Psoas muscle (tissue), 8 donors: ENCODE measurements at regions of chr14 and their contacts with region 1.

Region 1: GRCh38 chr14:61837336-61838229 is 75.4 kb downstream of the SNAPC1 start:
- DNase-seq: peak; percentile 64 to 78
- ATAC-seq: peak; percentile 90 to 99 (median 94)
- H3K4me3 ChIP-seq: no peak overlapping the region
- H3K27ac ChIP-seq: no peak overlapping the region
- H3K4me1 ChIP-seq: no peaks in the 10 kb centered on the region
- H3K27me3 ChIP-seq: no peaks in the 10 kb centered on the region
- CTCF ChIP-seq: peak; percentile 96

Region 2: DNA sequence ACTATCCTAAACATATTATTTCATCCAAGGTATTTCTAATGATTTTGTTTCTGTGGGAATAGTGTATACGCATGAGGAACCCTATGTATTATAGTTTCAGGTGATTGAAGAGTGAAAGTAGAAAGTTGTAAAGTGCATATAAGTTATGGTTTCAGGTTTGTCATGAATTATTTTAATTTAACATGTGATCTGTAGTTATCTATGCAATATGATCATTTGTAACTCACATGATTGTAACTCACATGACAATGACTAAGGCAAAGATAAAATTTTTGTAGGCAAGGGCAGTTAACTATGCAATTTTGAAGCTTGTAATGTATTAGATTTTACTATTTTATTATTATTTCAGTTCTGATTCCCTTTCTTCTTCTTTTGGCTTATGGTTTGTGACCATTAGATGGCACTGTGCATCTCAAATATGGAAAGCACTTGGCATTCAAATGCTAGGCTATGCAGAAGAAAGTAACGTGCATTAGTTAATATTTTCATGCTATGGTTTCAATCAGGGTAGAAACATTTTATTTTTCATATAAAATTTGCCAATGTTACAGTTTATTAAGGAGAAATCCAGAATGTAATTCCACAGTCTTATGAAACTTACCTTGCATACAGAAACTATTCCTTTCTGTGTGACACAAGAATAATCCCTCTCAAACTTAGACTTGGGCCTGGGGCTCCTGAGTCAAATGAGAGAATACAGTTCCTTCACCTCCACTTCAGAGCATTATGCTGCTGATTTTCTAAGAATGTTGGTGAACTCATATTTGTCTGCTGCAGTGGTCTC is 540.7 kb before region 1 on chr14:
- intact Hi-C with region 1: loop called in 1 of 2 experiments (anchors 5 kb)
- DNase-seq: no peak
- ATAC-seq: peak in 3 of 4 donors; percentile 41 to 80 (median 75)
- H3K4me3 ChIP-seq: no peak overlapping the region
- H3K27ac ChIP-seq: no peak overlapping the region
- H3K4me1 ChIP-seq: peaks cover 15% of the 10 kb centered on the region
- H3K27me3 ChIP-seq: no peaks in the 10 kb centered on the region
- CTCF ChIP-seq: peak; percentile 73

Region 3: GRCh38 chr14:61456720-61457119 is 380.9 kb before region 1 on chr14:
- intact Hi-C with region 1: loop called (anchors 1 to 2 kb)
- DNase-seq: peak; percentile 75 to 82
- ATAC-seq: peak; percentile 60 to 81 (median 73)
- H3K4me3 ChIP-seq: no peak overlapping the region
- H3K27ac ChIP-seq: no peak overlapping the region
- H3K4me1 ChIP-seq: peaks cover 6% of the 10 kb centered on the region
- H3K27me3 ChIP-seq: no peaks in the 10 kb centered on the region
- CTCF ChIP-seq: peak; percentile 80

Region 4: DNA sequence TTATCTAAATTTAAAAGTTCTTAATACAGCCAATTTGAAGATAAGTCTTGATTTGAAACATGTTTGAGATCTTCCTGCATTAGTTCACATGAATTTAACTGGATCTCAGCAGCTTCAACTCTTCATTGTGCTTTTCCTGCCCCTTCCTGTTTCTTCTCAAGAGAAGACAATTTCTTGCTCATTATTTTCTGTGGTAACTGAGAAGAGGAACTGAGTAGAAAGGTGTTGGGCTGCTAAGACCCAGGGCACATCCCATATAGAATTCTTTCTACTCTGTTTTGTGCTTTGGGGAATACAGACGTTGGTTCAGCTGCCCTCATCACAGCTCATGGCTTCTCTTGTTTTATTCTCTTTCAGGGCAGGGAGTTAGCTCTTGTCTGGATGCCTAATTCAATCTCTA is 34.9 kb after region 1 on chr14:
- intact Hi-C with region 1: no loop called
- DNase-seq: no peak
- ATAC-seq: no peak
- H3K4me3 ChIP-seq: no peak overlapping the region
- H3K27ac ChIP-seq: no peak overlapping the region
- H3K4me1 ChIP-seq: no peaks in the 10 kb centered on the region
- H3K27me3 ChIP-seq: peaks cover 0 to 4% (median 2%) of the 10 kb centered on the region in 3 donors
- CTCF ChIP-seq: no peak

Region 5: GRCh38 chr14:61899497-61899896 is 61.9 kb after region 1 on chr14:
- intact Hi-C with region 1: no loop called
- DNase-seq: no peak
- ATAC-seq: no peak
- H3K4me3 ChIP-seq: no peak overlapping the region
- H3K27ac ChIP-seq: no peak overlapping the region
- H3K4me1 ChIP-seq: no peaks in the 10 kb centered on the region
- H3K27me3 ChIP-seq: no peaks in the 10 kb centered on the region
- CTCF ChIP-seq: no peak